ENCODE measurements at regions of chr12 and their contacts with region 1.

Region 1: DNA sequence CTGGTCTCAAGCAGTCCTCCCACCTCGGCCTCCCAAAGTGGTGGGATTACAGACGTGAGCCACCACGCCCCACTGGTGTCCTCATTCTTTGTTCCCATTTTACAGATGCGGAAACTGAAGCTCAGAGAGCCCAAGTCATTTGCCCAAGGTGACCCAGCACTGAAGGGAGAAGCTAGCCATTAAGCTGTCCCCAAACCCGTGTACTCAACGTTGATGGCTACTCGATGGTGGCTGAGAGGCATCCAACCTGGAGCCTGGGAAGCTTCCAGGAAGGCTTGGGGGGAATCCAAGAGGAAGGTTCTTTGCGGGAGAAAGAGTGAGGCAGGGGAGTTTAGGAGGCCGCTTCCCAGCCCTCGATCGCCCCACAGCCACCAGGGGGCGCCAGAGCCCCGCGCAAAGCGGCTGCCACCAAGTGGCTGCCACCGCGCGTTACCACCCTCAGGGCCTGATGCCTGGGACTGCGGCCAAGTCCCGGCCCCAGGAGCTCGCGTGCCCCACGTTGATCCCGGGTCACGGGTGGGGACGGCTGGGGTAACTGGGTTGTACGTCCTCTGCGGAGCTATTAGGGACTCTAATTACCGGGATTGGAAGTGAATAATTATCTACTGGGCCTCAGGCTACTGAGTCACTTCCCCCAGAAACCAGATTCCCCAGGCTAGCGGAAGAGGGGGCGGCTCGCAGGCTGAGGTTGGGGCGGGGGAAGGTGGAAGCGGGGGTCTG is 8.8 kb upstream of the SH2B3 start:
- DNase-seq: peak; percentile 92
- ATAC-seq: peak; percentile 93

Region 2: GRCh38 chr12:111330800-111331752 is 65.8 kb before region 1 on chr12:
- intact Hi-C with region 1: no loop called
- DNase-seq: no peak
- ATAC-seq: peak; percentile 42

Region 3: DNA sequence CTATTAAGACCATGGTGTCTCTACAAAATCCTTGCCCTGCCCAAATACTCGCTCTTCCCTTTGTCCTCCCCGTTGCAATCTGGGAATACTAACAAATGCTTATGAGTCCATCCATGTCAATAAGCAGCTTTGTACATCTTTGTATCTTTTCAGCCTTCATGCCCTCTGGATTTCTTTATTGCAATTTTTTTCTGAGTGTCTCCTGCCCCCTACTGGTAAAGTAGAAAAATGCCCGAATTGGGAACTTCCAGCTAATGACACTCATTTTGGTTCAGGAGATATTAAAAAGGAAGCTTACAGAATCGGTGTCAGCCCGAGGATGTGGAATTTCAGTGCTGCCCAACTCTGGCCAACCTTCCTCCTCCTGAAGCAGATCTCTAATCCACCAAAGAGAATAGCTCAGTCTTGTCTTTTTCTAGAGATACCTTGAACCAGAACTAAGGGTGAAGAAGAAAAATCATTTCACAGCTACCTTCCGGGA is 54.8 kb after region 1 on chr12:
- intact Hi-C with region 1: loop called (anchors 2 kb)
- DNase-seq: no peak
- ATAC-seq: peak; percentile 33

Region 4: DNA sequence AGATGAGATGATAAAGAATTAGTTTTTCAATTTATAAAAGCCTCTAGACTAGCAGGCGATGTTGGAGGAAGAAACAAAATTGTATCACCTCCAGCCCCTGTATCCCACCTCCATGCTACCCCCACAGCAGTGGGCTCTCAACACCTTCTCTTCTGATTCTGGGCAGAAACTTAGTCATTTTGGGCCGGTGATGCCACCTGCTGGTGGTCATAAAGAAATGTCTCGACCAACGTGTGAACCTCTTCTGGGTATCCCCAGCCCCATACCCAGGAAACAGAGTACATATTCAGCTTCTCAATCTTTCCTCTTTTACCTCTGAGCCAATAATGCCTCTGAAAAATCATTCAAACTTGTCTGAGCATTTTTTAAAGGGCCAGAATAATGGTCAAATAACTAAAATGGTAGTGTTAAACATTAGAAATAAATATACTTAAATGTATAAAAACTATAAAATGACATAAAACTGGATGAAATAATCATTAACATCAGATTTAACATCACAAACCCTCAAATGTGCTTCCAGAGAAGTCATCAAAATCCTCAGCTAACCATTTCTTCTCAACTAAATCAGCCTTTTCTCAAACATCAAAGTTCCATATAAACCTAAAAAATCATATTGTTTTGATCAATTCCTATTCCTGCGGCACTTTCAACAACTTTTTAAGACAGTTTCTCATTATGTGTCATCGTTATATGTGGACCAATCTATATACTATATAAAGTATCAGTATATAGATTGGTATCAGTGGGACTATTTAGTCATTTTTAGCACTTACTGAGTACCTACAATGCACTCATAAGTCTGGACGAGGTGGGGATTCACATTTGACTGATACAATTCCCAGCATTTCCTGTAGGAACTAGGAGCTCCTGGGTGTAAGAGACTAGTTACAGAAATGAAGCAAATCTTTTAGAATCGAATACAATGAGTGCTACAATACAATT is 132.8 kb after region 1 on chr12:
- intact Hi-C with region 1: loop called (anchors 2 kb)
- DNase-seq: no peak
- ATAC-seq: peak; percentile 65